WTC11 (cell line): ENCODE measurements at regions of chr4 and their contacts with region 1.

Region 1: GRCh38 chr4:75831856-75832405 is 70.3 kb downstream of the PPEF2 start:
- DNase-seq: no peak
- ATAC-seq: peak; percentile 97
- H3K4me3 Mint-ChIP-seq: no peak overlapping the region; the same call in 1 of the 2 replicates
- H3K27ac Mint-ChIP-seq: peak overlapping the region; percentile 93
- H3K4me1 Mint-ChIP-seq: peaks cover 29% of the 10 kb centered on the region
- H3K27me3 Mint-ChIP-seq: no peaks in the 10 kb centered on the region
- CTCF ChIP-seq: no peak

Region 2: DNA sequence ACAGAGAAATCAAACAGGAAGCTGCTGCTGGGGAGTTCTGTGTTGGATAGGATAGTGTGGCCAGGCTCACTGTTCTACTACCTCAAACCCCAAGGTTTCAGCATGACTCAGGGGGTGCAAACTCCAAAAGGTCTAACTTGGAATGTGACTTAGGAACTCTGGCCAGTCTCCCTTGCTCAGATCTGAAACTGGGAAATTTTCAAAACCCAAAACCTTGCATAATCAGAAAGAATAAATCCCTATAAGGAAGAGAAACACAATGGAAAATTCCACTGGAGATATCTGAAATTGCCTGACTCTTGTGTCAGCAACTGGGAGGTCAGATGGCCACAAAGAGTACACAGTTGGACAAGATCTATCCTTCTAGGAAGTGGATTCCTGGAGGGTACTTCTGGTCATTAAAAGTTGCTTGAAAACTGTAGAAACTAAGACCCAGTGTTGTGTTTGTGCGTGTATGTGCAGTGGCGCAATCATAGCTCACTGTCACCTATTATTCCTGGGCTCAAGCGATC is 12.3 kb after region 1 on chr4:
- CTCF ChIA-PET with region 1: interaction called, 18 read pairs
- POLR2A ChIA-PET with region 1: interaction called, 3 read pairs
- DNase-seq: no peak
- ATAC-seq: no peak
- H3K4me3 Mint-ChIP-seq: no peak overlapping the region
- H3K27ac Mint-ChIP-seq: no peak overlapping the region
- H3K4me1 Mint-ChIP-seq: peaks cover 24% of the 10 kb centered on the region
- H3K27me3 Mint-ChIP-seq: no peaks in the 10 kb centered on the region
- CTCF ChIP-seq: no peak